ENCODE measurements at regions of chrX and their contacts with region 1.

Region 1: GRCh38 chrX:78375894-78376293 is 48.5 kb upstream of the CYSLTR1 start:
- DNase-seq: no peak
- H3K4me3 Mint-ChIP-seq: no peak overlapping the region
- H3K27ac Mint-ChIP-seq: peak overlapping the region; percentile 31
- H3K4me1 Mint-ChIP-seq: peaks cover 31% of the 10 kb centered on the region
- H3K27me3 Mint-ChIP-seq: no peaks in the 10 kb centered on the region

Region 2: GRCh38 chrX:77910108-77910840 is 465.6 kb before region 1 on chrX and contains the start of gene ATP7A:
- intact Hi-C with region 1: no loop called
- DNase-seq: peak; percentile 86
- H3K4me3 Mint-ChIP-seq: peak within 1 kb of the TSS; percentile 93
- H3K27ac Mint-ChIP-seq: peak within 1 kb of the TSS; percentile 97
- H3K4me1 Mint-ChIP-seq: peaks cover 9% of the 10 kb centered on the region
- H3K27me3 Mint-ChIP-seq: no peaks in the 10 kb centered on the region
- total RNA-seq, gene ATP7A: 6.2 and 6.6 TPM in 2 replicates

Region 3: DNA sequence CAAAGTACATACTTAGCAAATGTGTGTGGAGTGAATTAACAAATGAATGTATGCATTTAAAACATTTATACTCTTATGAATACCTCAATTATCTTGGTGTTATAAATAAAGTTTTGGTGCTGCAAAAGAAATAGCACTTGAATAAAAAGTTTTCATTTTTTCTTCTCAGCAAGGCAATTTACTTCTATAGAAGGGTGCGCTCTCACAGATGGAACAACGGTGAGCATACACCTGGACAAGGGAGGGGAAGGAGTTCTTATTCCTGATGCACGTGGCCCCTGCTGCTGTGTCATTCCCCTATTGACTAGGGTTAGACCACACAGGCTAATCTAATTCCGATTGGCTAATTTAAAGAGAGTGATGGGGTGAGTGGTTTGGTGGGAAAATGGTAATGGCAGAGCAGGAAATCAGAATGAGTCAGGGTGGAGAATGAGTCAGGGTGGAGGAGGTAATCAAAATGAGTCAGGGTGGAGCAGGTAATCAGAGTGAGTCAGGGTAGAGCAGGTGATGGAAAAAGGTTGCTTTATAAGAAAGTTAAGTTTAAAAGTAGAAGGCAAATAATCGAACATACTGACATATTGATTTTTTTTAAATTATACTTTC is 300.0 kb before region 1 on chrX:
- intact Hi-C with region 1: no loop called
- DNase-seq: no peak
- H3K4me3 Mint-ChIP-seq: no peak overlapping the region
- H3K27ac Mint-ChIP-seq: peak overlapping the region; percentile 6
- H3K4me1 Mint-ChIP-seq: peaks cover 6% of the 10 kb centered on the region
- H3K27me3 Mint-ChIP-seq: no peaks in the 10 kb centered on the region

Region 4: GRCh38 chrX:78139160-78140123 is 236.5 kb before region 1 on chrX and contains the start of gene TAF9B:
- intact Hi-C with region 1: loop called (anchors 1 kb)
- DNase-seq: peak; percentile 80
- H3K4me3 Mint-ChIP-seq: peak within 1 kb of the TSS; percentile 88
- H3K27ac Mint-ChIP-seq: peak within 1 kb of the TSS; percentile 93
- H3K4me1 Mint-ChIP-seq: peaks cover 8% of the 10 kb centered on the region
- H3K27me3 Mint-ChIP-seq: no peaks in the 10 kb centered on the region
- total RNA-seq, gene TAF9B: 16.8 and 17.0 TPM in 2 replicates

Region 5: GRCh38 chrX:78314571-78314970 is 61.3 kb before region 1 on chrX:
- intact Hi-C with region 1: loop called (anchors 1 kb)
- DNase-seq: no peak
- H3K4me3 Mint-ChIP-seq: peak overlapping the region; percentile 19
- H3K27ac Mint-ChIP-seq: peak overlapping the region; percentile 73
- H3K4me1 Mint-ChIP-seq: peaks cover 47% of the 10 kb centered on the region
- H3K27me3 Mint-ChIP-seq: no peaks in the 10 kb centered on the region

Region 6: DNA sequence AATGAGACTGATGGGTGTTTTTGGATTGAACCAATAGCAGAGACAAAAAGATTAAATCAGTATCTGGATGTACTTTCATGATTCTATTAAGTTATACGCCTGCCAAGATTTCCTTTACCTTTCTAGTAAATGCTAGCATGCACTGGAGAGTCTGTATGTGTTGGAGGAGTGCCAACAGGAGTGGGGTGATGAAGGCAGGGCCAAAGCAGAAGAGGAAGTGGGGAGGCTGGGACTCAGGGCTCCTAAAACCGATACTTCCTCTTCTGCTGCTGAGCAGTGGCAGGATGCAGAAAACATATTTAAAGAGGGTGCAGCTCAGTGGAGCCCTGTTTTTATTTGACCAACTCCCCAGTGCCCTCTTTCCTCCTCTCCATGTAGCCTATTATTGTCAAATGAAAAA is 54.1 kb before region 1 on chrX:
- intact Hi-C with region 1: loop called (anchors 2 kb)
- DNase-seq: peak; percentile 38
- H3K4me3 Mint-ChIP-seq: peak overlapping the region; percentile 33
- H3K27ac Mint-ChIP-seq: peak overlapping the region; percentile 89
- H3K4me1 Mint-ChIP-seq: peaks cover 30% of the 10 kb centered on the region
- H3K27me3 Mint-ChIP-seq: no peaks in the 10 kb centered on the region

Region 7: DNA sequence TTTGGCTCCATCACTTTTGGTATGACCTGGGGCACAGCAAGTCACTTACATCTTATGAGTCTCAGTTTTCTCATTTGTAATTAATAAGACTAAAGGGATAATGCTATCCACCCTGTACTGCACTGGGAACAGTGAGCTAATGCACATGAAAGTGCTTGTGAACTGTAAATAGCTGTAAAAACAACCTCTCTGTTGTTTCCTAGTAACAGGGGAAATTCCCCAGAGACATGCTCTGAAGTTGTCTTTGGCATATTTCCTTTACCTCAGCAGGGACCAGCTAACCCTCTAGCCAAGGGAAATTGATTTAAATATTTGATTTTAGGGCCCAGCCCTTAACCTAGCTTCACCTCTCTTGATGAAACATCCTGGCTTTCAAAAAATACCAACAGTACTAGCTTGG is 42.4 kb before region 1 on chrX:
- intact Hi-C with region 1: loop called (anchors 2 kb)
- DNase-seq: no peak
- H3K4me3 Mint-ChIP-seq: no peak overlapping the region
- H3K27ac Mint-ChIP-seq: peak overlapping the region; percentile 75
- H3K4me1 Mint-ChIP-seq: peaks cover 52% of the 10 kb centered on the region
- H3K27me3 Mint-ChIP-seq: no peaks in the 10 kb centered on the region

Region 8: GRCh38 chrX:78346826-78347225 is 29.1 kb before region 1 on chrX:
- intact Hi-C with region 1: no loop called
- DNase-seq: no peak
- H3K4me3 Mint-ChIP-seq: no peak overlapping the region
- H3K27ac Mint-ChIP-seq: no peak overlapping the region
- H3K4me1 Mint-ChIP-seq: no peaks in the 10 kb centered on the region
- H3K27me3 Mint-ChIP-seq: no peaks in the 10 kb centered on the region

Region 9: GRCh38 chrX:78357342-78358060 is 18.4 kb before region 1 on chrX:
- intact Hi-C with region 1: no loop called
- DNase-seq: no peak
- H3K4me3 Mint-ChIP-seq: no peak overlapping the region
- H3K27ac Mint-ChIP-seq: no peak overlapping the region
- H3K4me1 Mint-ChIP-seq: peaks cover 4% of the 10 kb centered on the region
- H3K27me3 Mint-ChIP-seq: no peaks in the 10 kb centered on the region

Region 10: DNA sequence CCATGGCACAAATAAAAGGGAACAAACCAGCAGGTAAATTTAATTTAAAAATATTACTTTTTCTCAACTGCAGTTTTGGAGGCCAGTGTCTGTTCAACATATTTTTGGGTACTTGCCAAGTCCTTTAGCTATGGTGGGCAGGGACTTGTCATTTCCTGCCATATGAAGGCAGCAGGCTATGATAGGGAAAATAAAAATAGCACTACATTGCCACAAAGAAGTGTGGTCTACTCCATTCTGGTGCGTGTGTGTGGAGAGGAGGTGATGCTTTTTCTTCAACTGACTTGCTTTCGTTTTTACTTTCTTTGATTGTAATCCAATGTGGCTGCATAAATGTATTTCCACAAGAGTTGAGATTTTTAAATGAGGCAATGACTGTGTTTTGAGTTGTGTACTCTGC is 785.8 kb after region 1 on chrX:
- intact Hi-C with region 1: loop called (anchors 10 kb)
- DNase-seq: peak; percentile 43
- H3K4me3 Mint-ChIP-seq: peak overlapping the region; percentile 89
- H3K27ac Mint-ChIP-seq: peak overlapping the region; percentile 99
- H3K4me1 Mint-ChIP-seq: peaks cover 54% of the 10 kb centered on the region
- H3K27me3 Mint-ChIP-seq: no peaks in the 10 kb centered on the region

Measured in activated T-helper 2 cell treated with anti-CD3 and anti-CD28 coated beads, Interferon-gamma antibody, Interleukin-2, Interleukin-4, amounts not matched to agents 10 μg/mL and 5 μg/mL and 100 μg/mL, durations not matched to agents 14 hours and 24 hours and 36 hours (primary cell).